ENCODE measurements at regions of chr17 and their contacts with region 1.

Region 1: DNA sequence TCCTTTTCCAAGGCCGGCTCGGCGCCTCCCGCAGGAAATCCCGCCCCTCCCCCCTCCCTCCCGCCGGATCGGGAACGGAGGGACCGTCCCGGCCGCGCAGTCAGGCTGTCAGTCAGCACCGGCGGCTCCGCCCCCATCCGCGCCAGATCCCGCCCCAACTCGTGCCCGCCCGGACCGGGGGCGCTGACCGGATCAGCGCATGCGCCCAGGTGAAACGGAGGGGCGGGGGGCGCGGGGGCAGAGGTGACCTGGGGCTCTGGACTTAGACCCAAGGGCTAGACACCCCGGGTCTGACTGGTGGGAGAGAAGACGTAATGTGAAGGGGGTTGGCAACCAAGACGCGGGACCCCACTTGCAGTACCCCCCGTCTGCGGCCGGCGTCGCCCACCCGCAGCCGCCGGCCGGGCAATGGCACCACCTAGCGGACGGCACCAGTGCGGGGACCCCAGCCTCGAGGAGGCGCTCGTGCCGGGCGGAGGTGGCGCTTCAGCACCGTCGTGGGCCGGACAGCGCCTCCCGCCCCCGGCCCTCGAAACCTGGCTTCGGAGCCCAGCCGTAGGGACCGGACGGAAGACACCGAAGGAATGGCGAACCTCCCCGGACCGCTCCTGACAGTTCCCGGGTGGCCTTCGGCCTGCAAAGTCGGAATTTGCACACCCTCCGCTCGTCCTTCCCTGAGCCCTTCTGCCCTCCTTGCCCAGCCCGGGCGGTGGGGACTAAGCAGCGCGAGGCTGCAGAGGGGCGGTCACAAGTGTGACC is at the start of gene CASKIN2:
- DNase-seq: peak; percentile 40 to 58 (median 47)
- H3K4me3 ChIP-seq: peak within 1 kb of the TSS; percentile 20 to 92 (median 82)
- H3K4me3 Mint-ChIP-seq: peak within 1 kb of the TSS; percentile 81 to 86
- H3K27ac ChIP-seq: no peak within 1 kb of the TSS
- H3K27ac Mint-ChIP-seq: peak within 1 kb of the TSS in 1 of 7 donors; percentile 11
- H3K4me1 ChIP-seq: peaks cover 18 to 38% of the 10 kb centered on the region in 2 donors
- H3K4me1 Mint-ChIP-seq: peaks cover 18% of the 10 kb centered on the region
- H3K27me3 ChIP-seq: peaks cover 3 to 28% of the 10 kb centered on the region in 2 donors
- H3K27me3 Mint-ChIP-seq: peaks cover 12 to 38% (median 22%) of the 10 kb centered on the region in 3 donors
- CTCF ChIP-seq: peak; percentile 82
- polyA plus RNA-seq, gene CASKIN2: 0.33 TPM in 1 of 3 donors, not detected in the others

Region 2: GRCh38 chr17:75456417-75457046 is 59.1 kb before region 1 on chr17 and contains the start of gene TMEM94:
- intact Hi-C with region 1: loop called in 1 of 2 experiments (anchors 5 kb)
- DNase-seq: peak; percentile 95 to 98 (median 97)
- H3K4me3 ChIP-seq: peak within 1 kb of the TSS; percentile 73 to 89 (median 84)
- H3K4me3 Mint-ChIP-seq: peak within 1 kb of the TSS; percentile 89 to 96
- H3K27ac ChIP-seq: peak within 1 kb of the TSS; percentile 74 to 89
- H3K27ac Mint-ChIP-seq: peak within 1 kb of the TSS; percentile 87 to 95 (median 94)
- H3K4me1 ChIP-seq: peaks cover 35 to 42% of the 10 kb centered on the region in 2 donors
- H3K4me1 Mint-ChIP-seq: peaks cover 46% of the 10 kb centered on the region
- H3K27me3 ChIP-seq: no peaks in the 10 kb centered on the region
- H3K27me3 Mint-ChIP-seq: peaks cover 0 to 2% (median 2%) of the 10 kb centered on the region in 3 donors
- CTCF ChIP-seq: no peak
- polyA plus RNA-seq, gene TMEM94: 7.2 to 129 (median 8.4) TPM

Region 3: DNA sequence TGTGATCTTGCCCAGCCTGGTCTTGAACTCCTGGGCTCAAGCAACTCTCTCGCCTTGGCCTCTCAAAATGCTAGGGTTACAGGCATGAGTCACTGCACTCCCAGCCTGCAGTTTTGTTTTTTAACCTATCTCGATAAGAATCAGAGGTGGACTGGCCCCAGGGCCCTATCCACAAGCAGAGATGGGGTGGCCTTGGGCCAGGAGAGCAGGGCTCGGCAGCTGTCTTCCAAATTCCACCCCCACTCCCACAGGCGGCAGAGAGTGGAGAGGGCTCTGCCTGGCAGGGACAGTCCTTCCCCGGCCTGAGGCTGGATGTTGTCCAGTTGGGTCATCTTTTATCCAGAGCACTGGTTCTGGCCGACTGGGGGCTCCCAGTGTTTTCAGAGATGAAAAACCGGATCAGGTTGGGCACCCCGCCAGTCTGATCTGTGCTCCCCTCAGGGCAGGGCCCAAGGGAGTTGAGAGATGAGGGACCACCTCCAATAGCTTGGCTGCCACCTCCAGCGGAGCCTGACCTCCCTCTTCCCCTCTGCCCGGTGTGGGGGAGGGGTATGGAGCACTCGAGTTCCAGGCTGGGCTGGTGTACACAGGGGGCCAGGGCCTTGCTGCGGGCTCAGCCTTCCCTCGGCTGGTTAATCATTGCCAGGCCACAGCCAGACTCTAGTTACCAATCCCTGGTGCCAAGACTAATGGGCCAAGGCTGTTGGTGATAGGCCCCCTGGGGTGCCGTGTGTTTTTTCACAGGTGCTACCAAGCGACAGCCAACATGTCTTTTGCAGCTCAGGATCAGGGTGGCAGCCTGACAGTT is 41.6 kb after region 1 on chr17:
- intact Hi-C with region 1: no loop called
- DNase-seq: no peak
- H3K4me3 ChIP-seq: no peak overlapping the region
- H3K4me3 Mint-ChIP-seq: no peak overlapping the region
- H3K27ac ChIP-seq: no peak overlapping the region
- H3K27ac Mint-ChIP-seq: no peak overlapping the region
- H3K4me1 ChIP-seq: no peaks in the 10 kb centered on the region
- H3K4me1 Mint-ChIP-seq: no peaks in the 10 kb centered on the region
- H3K27me3 ChIP-seq: no peaks in the 10 kb centered on the region
- H3K27me3 Mint-ChIP-seq: peaks cover 0 to 5% (median 0%) of the 10 kb centered on the region in 3 donors
- CTCF ChIP-seq: no peak

Region 4: DNA sequence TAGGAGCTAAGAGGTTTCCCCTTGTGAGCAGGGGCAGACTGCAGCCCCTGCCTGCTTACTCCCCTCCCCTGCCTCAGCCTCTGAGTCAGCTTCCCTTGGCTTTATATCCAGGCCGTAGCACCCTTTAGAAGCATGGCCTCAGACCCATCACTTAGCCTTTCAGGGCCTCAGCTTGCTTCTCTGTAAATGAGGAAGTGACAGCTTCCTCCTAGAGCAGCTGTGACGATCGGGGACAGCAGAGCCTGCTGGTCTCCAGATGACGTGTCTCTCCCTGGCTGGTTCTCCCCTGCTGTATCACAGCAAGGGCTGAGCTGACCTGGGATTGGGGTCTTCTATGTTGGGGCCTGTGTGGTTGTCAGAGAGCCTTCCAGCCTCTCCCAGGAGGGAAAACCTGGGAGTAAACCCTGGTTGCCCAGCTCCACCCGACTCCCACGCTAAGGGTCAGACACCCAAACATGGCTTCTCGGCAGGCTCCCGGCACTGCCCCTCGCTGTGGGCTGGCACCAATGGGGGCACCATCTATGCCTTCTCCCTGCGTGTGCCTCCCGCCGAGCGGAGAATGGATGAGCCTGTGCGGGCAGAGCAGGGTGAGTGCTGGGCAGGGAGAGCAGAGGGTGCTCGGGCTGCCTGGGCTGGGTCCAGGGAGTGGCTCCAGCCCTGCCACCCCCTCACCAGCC is 55.7 kb after region 1 on chr17:
- intact Hi-C with region 1: loop called in 1 of 2 experiments (anchors 5 kb)
- DNase-seq: peak; percentile 91 to 98 (median 98)
- H3K4me3 ChIP-seq: peak overlapping the region in 1 of 3 experiments; percentile 39
- H3K4me3 Mint-ChIP-seq: peak overlapping the region in 1 of 2 donors; percentile 53
- H3K27ac ChIP-seq: peak overlapping the region; percentile 78 to 90
- H3K27ac Mint-ChIP-seq: peak overlapping the region; percentile 85 to 98 (median 97)
- H3K4me1 ChIP-seq: peaks cover 23 to 24% of the 10 kb centered on the region in 2 donors
- H3K4me1 Mint-ChIP-seq: peaks cover 23% of the 10 kb centered on the region
- H3K27me3 ChIP-seq: no peaks in the 10 kb centered on the region
- H3K27me3 Mint-ChIP-seq: peaks cover under 1 to 7% (median 5%) of the 10 kb centered on the region in 3 donors
- CTCF ChIP-seq: no peak

Region 5: GRCh38 chr17:75589012-75589918 is 73.6 kb after region 1 on chr17:
- intact Hi-C with region 1: loop called (anchors 2 to 5 kb)
- DNase-seq: peak; percentile 81 to 91 (median 86)
- H3K4me3 ChIP-seq: peak overlapping the region; percentile 65 to 88 (median 80)
- H3K4me3 Mint-ChIP-seq: peak overlapping the region; percentile 83 to 87
- H3K27ac ChIP-seq: peak overlapping the region; percentile 88 to 89
- H3K27ac Mint-ChIP-seq: peak overlapping the region in 6 of 7 donors; percentile 75 to 87 (median 84)
- H3K4me1 ChIP-seq: peaks cover 21 to 30% of the 10 kb centered on the region in 2 donors
- H3K4me1 Mint-ChIP-seq: peaks cover 16% of the 10 kb centered on the region
- H3K27me3 ChIP-seq: no peaks in the 10 kb centered on the region
- H3K27me3 Mint-ChIP-seq: peaks cover 0 to 2% (median 0%) of the 10 kb centered on the region in 3 donors
- CTCF ChIP-seq: peak; percentile 75

Measured in CD14-positive monocyte (primary cell).